ENCODE measurements at regions of chr5 and their contacts with region 1.

Region 1: GRCh38 chr5:100777680-100778281 is 125.3 kb downstream of the ST8SIA4 start:
- DNase-seq: peak; percentile 73 to 91 (median 89)
- H3K4me3 ChIP-seq: peak overlapping the region in 3 of 7 experiments; percentile 14 to 22 (median 19)
- H3K27ac ChIP-seq: peak overlapping the region in 1 of 2 experiments; percentile 49
- H3K4me1 ChIP-seq: peaks cover 12 to 38% (median 22%) of the 10 kb centered on the region in 4 experiments
- H3K27me3 ChIP-seq: no peaks in the 10 kb centered on the region

Region 2: DNA sequence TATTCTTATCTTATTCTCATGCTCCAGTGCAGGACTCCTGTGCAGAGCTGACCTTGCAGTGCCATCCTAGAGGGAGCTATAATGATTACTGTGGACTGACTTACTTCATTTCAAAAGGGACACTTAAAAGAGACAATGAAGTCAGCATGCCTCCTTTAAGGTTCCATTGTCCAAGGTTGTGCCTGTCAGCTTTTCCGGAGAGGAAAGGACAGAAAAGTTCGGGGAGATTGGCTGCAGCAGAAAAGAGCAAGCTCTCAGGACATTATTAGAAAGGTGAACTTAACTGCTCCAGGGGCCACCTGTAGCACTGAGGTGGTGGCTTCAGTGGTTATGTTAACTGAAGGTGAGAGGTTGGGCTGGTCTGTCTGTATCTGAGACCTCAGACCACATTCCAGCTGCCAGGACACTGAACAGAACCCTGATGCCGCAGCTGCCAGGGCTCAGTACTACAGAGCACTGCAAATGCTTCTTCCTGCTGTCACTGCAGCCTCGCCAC is 12.4 kb after region 1 on chr5:
- CTCF ChIA-PET with region 1: interaction called, 10 read pairs
- POLR2A ChIA-PET with region 1: no interaction called
- DNase-seq: peak in 2 of 3 donors; percentile 5 to 7
- H3K4me3 ChIP-seq: no peak overlapping the region
- H3K27ac ChIP-seq: no peak overlapping the region
- H3K4me1 ChIP-seq: peaks cover 0 to 3% (median 0%) of the 10 kb centered on the region in 4 experiments
- H3K27me3 ChIP-seq: no peaks in the 10 kb centered on the region

Region 3: DNA sequence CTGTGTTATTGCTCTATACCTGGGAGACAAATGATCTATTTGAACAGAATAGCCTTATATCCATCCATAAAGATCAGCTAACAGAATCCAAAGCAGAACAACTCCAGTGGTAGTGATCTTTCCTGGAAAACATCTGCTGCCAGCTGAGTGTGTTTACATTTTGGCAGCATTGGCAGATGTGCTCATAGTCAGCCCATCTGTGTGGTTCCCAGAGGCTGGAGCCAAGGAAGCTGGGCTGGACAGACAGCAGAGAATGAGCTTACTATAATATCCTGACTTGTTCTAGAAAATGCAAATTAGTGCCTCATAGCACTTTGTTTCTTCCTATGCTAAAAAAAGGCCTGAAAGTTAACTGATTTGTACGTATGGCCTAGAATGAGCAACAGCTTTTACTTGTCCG is 25.6 kb after region 1 on chr5:
- CTCF ChIA-PET with region 1: no interaction called
- POLR2A ChIA-PET with region 1: no interaction called
- DNase-seq: no peak
- H3K4me3 ChIP-seq: no peak overlapping the region
- H3K27ac ChIP-seq: no peak overlapping the region
- H3K4me1 ChIP-seq: no peaks in the 10 kb centered on the region
- H3K27me3 ChIP-seq: no peaks in the 10 kb centered on the region